ENCODE measurements at regions of chr21 and their contacts with region 1.

Region 1: DNA sequence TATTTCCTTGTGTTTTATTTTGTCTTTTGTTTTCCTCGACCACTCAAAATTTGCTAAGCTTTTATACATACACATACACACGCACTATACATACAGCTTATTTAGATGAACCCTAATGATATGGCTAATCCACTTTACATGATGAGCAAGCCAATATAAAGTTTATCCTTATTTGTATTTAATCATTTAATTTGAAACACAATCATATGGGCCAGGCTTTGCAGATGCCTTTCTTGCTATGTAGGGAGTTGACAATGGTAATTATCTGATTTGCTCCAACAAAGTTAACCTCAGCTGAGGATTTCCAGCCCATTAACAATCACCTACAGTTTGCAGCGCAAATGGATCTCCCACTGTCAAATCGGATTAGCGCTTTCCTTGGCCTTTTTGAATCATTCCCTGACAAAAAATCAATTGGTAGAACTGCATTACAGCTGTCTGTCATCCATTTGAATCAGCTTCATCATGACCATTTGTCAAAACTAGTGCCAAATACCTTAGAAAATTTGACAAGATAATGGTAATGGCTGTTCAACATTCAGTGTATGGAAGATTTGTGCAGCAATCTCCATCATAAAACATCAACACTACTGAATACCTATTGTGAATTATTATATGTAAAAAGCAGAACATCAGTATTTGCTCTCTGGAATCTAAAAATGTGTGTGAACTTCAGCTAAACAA is 352.6 kb downstream of the MRPL39 start:
- DNase-seq: no peak
- H3K4me3 ChIP-seq: no peak overlapping the region
- H3K27ac ChIP-seq: no peak overlapping the region
- H3K4me1 ChIP-seq: no peaks in the 10 kb centered on the region
- H3K27me3 ChIP-seq: no peaks in the 10 kb centered on the region
- CTCF ChIP-seq: no peak
- POLR2A ChIP-seq: no peak

Region 2: GRCh38 chr21:24436236-24436635 is 818.4 kb before region 1 on chr21:
- intact Hi-C with region 1: no loop called
- DNase-seq: peak in 1 of 2 donors; percentile 47
- H3K4me3 ChIP-seq: no peak overlapping the region
- H3K27ac ChIP-seq: no peak overlapping the region
- H3K4me1 ChIP-seq: no peaks in the 10 kb centered on the region
- H3K27me3 ChIP-seq: no peaks in the 10 kb centered on the region
- CTCF ChIP-seq: no peak
- POLR2A ChIP-seq: no peak

Region 3: DNA sequence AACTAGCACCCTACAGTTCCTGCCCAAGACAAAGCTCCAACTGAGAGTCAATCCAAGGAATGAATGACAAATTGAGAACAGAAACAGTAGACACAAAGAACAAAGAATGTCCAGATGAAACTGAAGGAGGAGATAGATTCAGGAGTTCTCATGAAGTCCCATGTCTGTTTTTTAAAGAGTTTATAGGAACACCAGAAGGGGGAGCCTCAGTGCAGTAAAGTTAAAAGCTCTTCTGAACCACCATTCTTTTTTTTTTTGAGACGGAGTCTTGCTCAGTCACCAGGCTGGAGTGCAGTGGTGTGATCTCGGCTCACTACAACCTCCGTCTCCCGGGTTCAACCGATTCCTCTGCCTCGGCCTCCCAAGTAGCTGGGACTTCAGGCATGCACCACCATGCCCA is 29.1 kb after region 1 on chr21:
- intact Hi-C with region 1: loop called (anchors 1 kb)
- DNase-seq: no peak
- H3K4me3 ChIP-seq: no peak overlapping the region
- H3K27ac ChIP-seq: no peak overlapping the region
- H3K4me1 ChIP-seq: no peaks in the 10 kb centered on the region
- H3K27me3 ChIP-seq: no peaks in the 10 kb centered on the region
- CTCF ChIP-seq: no peak
- POLR2A ChIP-seq: no peak

Region 4: DNA sequence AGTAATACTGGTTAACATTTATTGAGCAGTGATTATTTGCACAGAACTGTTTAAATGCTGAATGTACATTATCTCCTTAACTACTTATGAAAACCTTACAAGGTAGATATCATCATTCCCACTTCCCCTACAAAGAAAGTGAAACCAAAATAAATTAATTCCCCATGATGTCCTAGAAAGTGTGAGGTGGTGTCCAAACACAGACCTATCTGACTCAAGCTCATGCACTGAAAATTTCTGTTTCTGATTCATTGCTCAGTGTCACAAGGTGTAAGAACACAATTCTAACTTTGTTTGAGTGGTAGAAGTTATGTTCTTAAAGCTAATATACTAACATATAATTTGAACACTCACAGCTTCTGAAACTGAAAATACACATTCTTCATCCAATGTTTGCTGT is 173.9 kb after region 1 on chr21:
- intact Hi-C with region 1: no loop called
- DNase-seq: no peak
- H3K4me3 ChIP-seq: no peak overlapping the region
- H3K27ac ChIP-seq: no peak overlapping the region
- H3K4me1 ChIP-seq: no peaks in the 10 kb centered on the region
- H3K27me3 ChIP-seq: no peaks in the 10 kb centered on the region
- CTCF ChIP-seq: no peak
- POLR2A ChIP-seq: no peak

Region 5: GRCh38 chr21:26405735-26406361 is 1151.2 kb after region 1 on chr21:
- intact Hi-C with region 1: no loop called
- DNase-seq: no peak
- H3K4me3 ChIP-seq: no peak overlapping the region
- H3K27ac ChIP-seq: no peak overlapping the region
- H3K4me1 ChIP-seq: no peaks in the 10 kb centered on the region
- H3K27me3 ChIP-seq: no peaks in the 10 kb centered on the region
- CTCF ChIP-seq: no peak
- POLR2A ChIP-seq: no peak

Measured in breast epithelium (tissue), 4 donors.